ENCODE measurements at regions of chr1 and their contacts with region 1.

Region 1: GRCh38 chr1:204411451-204412204 is at the start of gene PPP1R15B:
- DNase-seq: peak; percentile 95 to 99 (median 97)
- ATAC-seq: peak; percentile 89
- H3K4me3 ChIP-seq: peak within 1 kb of the TSS; percentile 83 to 94
- H3K4me3 Mint-ChIP-seq: peak within 1 kb of the TSS; percentile 98
- H3K27ac ChIP-seq: peak within 1 kb of the TSS; percentile 95 to 99
- H3K27ac Mint-ChIP-seq: peak within 1 kb of the TSS; percentile 99
- H3K4me1 ChIP-seq: no peaks in the 10 kb centered on the region
- H3K4me1 Mint-ChIP-seq: peaks cover 11% of the 10 kb centered on the region
- H3K27me3 ChIP-seq: no peaks in the 10 kb centered on the region
- H3K27me3 Mint-ChIP-seq: no peaks in the 10 kb centered on the region
- CTCF ChIP-seq: no peak
- total RNA-seq, gene PPP1R15B: 144 to 146 TPM

Region 2: GRCh38 chr1:202957733-202958543 is 1453.7 kb before region 1 on chr1 and contains the start of gene ADIPOR1:
- CTCF ChIA-PET with region 1: no interaction called
- POLR2A ChIA-PET with region 1: no interaction called
- intact Hi-C with region 1: loop called in 1 of 2 experiments (anchors 2 kb)
- DNase-seq: peak; percentile 89 to 96 (median 94)
- ATAC-seq: peak; percentile 97
- H3K4me3 ChIP-seq: peak within 1 kb of the TSS; percentile 89 to 93
- H3K4me3 Mint-ChIP-seq: peak within 1 kb of the TSS; percentile 81
- H3K27ac ChIP-seq: peak within 1 kb of the TSS; percentile 89 to 94
- H3K27ac Mint-ChIP-seq: peak within 1 kb of the TSS; percentile 92
- H3K4me1 ChIP-seq: peaks cover 36% of the 10 kb centered on the region
- H3K4me1 Mint-ChIP-seq: peaks cover 46% of the 10 kb centered on the region
- H3K27me3 ChIP-seq: no peaks in the 10 kb centered on the region
- H3K27me3 Mint-ChIP-seq: no peaks in the 10 kb centered on the region
- CTCF ChIP-seq: no peak
- total RNA-seq, gene ADIPOR1: 106 to 117 TPM

Region 3: GRCh38 chr1:203861379-203862184 is 550.0 kb before region 1 on chr1 and contains the start of gene SNRPE:
- CTCF ChIA-PET with region 1: no interaction called
- POLR2A ChIA-PET with region 1: no interaction called
- intact Hi-C with region 1: loop called (anchors 2 to 5 kb)
- DNase-seq: peak; percentile 91 to 99 (median 96)
- ATAC-seq: peak; percentile 98
- H3K4me3 ChIP-seq: peak within 1 kb of the TSS; percentile 92 to 97
- H3K4me3 Mint-ChIP-seq: peak within 1 kb of the TSS; percentile 97
- H3K27ac ChIP-seq: peak within 1 kb of the TSS; percentile 80 to 86
- H3K27ac Mint-ChIP-seq: peak within 1 kb of the TSS; percentile 96
- H3K4me1 ChIP-seq: peaks cover 11% of the 10 kb centered on the region
- H3K4me1 Mint-ChIP-seq: peaks cover 21% of the 10 kb centered on the region
- H3K27me3 ChIP-seq: no peaks in the 10 kb centered on the region
- H3K27me3 Mint-ChIP-seq: no peaks in the 10 kb centered on the region
- CTCF ChIP-seq: peak; percentile 91
- total RNA-seq, gene SNRPE: 66.5 to 84.0 TPM

Region 4: GRCh38 chr1:204398217-204399081 is 13.2 kb before region 1 on chr1:
- CTCF ChIA-PET with region 1: interaction called, 62 read pairs
- POLR2A ChIA-PET with region 1: interaction called, 6 read pairs
- intact Hi-C with region 1: loop called in 1 of 2 experiments (anchors 1 kb)
- DNase-seq: peak; percentile 16 to 86 (median 54)
- ATAC-seq: peak; percentile 97
- H3K4me3 ChIP-seq: no peak overlapping the region
- H3K4me3 Mint-ChIP-seq: no peak overlapping the region
- H3K27ac ChIP-seq: peak overlapping the region in 1 of 2 experiments; percentile 21
- H3K27ac Mint-ChIP-seq: peak overlapping the region; percentile 80
- H3K4me1 ChIP-seq: peaks cover 4% of the 10 kb centered on the region
- H3K4me1 Mint-ChIP-seq: peaks cover 9% of the 10 kb centered on the region
- H3K27me3 ChIP-seq: no peaks in the 10 kb centered on the region
- H3K27me3 Mint-ChIP-seq: no peaks in the 10 kb centered on the region
- CTCF ChIP-seq: peak; percentile 87

Region 5: GRCh38 chr1:204453141-204453772 is 41.6 kb after region 1 on chr1:
- CTCF ChIA-PET with region 1: no interaction called
- POLR2A ChIA-PET with region 1: no interaction called
- intact Hi-C with region 1: loop called in 1 of 2 experiments (anchors 1 kb)
- DNase-seq: peak; percentile 46 to 95 (median 71)
- ATAC-seq: peak; percentile 98
- H3K4me3 ChIP-seq: peak overlapping the region in 1 of 2 experiments; percentile 10
- H3K4me3 Mint-ChIP-seq: peak overlapping the region; percentile 57
- H3K27ac ChIP-seq: peak overlapping the region; percentile 13 to 75
- H3K27ac Mint-ChIP-seq: peak overlapping the region; percentile 88
- H3K4me1 ChIP-seq: peaks cover 17% of the 10 kb centered on the region
- H3K4me1 Mint-ChIP-seq: peaks cover 23% of the 10 kb centered on the region
- H3K27me3 ChIP-seq: no peaks in the 10 kb centered on the region
- H3K27me3 Mint-ChIP-seq: no peaks in the 10 kb centered on the region
- CTCF ChIP-seq: no peak

Region 6: DNA sequence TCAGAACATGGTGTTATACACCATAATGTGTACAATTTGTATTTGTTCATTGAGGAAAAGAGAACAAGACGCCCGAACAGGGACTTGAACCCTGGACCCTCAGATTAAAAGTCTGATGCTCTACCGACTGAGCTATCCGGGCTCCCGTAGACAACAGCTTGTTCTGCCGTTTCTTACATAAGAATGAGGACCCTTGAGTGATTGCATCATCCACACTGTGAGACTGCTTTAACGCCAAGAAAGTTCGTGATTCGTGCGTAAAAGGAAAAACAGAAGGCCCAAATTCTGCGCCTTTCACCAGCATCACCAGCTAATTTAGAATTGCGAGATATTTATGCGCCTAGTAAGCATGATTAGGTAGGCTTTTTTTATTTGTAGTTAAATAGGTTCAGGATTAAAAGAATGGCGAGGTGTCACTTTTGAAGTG is 95.3 kb after region 1 on chr1:
- CTCF ChIA-PET with region 1: interaction called, 11 read pairs
- POLR2A ChIA-PET with region 1: interaction called, 6 read pairs
- intact Hi-C with region 1: loop called in 1 of 2 experiments (anchors 1 kb)
- DNase-seq: peak; percentile 73 to 97 (median 85)
- ATAC-seq: peak; percentile 73
- H3K4me3 ChIP-seq: peak overlapping the region; percentile 39 to 64
- H3K4me3 Mint-ChIP-seq: peak overlapping the region; percentile 86
- H3K27ac ChIP-seq: peak overlapping the region; percentile 84 to 96
- H3K27ac Mint-ChIP-seq: peak overlapping the region; percentile 97
- H3K4me1 ChIP-seq: peaks cover 15% of the 10 kb centered on the region
- H3K4me1 Mint-ChIP-seq: peaks cover 33% of the 10 kb centered on the region
- H3K27me3 ChIP-seq: no peaks in the 10 kb centered on the region
- H3K27me3 Mint-ChIP-seq: no peaks in the 10 kb centered on the region
- CTCF ChIP-seq: no peak

Region 7: GRCh38 chr1:204940591-204940990 is 529.0 kb after region 1 on chr1:
- CTCF ChIA-PET with region 1: no interaction called
- POLR2A ChIA-PET with region 1: no interaction called
- intact Hi-C with region 1: no loop called
- DNase-seq: no peak
- ATAC-seq: no peak
- H3K4me3 ChIP-seq: no peak overlapping the region
- H3K4me3 Mint-ChIP-seq: no peak overlapping the region
- H3K27ac ChIP-seq: no peak overlapping the region
- H3K27ac Mint-ChIP-seq: no peak overlapping the region
- H3K4me1 ChIP-seq: no peaks in the 10 kb centered on the region
- H3K4me1 Mint-ChIP-seq: no peaks in the 10 kb centered on the region
- H3K27me3 ChIP-seq: no peaks in the 10 kb centered on the region
- H3K27me3 Mint-ChIP-seq: peaks cover 12% of the 10 kb centered on the region
- CTCF ChIP-seq: no peak

Region 8: DNA sequence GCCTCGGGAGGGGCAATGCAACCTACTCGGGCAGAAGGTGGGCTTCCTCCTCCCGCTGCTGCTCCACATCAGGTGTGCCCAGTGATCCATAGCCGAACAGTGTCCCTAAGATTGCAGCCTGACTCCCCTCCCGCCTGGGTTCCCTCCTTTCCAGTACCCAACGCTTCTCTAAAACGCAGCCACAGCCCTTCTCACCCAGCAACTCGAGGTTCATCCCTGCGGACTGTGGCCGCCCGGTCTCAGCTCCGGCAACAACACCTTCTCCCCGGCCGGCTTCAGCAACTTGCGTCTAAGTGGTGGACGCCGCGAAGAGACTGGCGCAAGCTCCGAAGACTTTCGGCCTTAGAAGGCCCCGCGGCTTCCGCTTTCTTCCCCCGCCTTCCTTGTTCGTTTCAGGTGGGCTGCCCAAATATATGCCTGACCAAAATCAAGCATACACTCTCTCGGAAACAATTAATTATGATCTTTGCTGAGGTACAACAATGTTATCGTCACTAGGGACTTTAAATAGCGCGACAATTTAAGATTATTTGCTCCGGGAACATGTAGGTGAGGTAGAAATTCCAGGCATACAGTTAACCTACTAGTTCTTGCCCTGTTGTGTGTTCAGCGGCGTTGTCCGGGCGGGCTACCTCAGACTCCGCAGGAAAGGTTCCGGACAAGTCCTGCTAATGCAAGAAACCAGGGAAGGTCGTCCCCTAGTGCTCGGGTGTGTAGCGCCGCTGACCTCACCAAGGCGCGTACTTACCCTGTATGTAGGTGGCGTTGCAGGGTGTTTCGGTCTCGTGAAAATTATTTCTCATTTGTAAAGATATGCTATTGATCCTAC is 710.2 kb after region 1 on chr1 and contains the start of gene RBBP5:
- CTCF ChIA-PET with region 1: no interaction called
- POLR2A ChIA-PET with region 1: no interaction called
- intact Hi-C with region 1: loop called in 1 of 2 experiments (anchors 5 kb)
- DNase-seq: peak; percentile 92 to 98 (median 95)
- ATAC-seq: peak; percentile 93
- H3K4me3 ChIP-seq: peak within 1 kb of the TSS; percentile 91 to 95
- H3K4me3 Mint-ChIP-seq: peak within 1 kb of the TSS; percentile 96
- H3K27ac ChIP-seq: peak within 1 kb of the TSS; percentile 88 to 97
- H3K27ac Mint-ChIP-seq: peak within 1 kb of the TSS; percentile 100
- H3K4me1 ChIP-seq: peaks cover 26% of the 10 kb centered on the region
- H3K4me1 Mint-ChIP-seq: peaks cover 46% of the 10 kb centered on the region
- H3K27me3 ChIP-seq: no peaks in the 10 kb centered on the region
- H3K27me3 Mint-ChIP-seq: no peaks in the 10 kb centered on the region
- CTCF ChIP-seq: peak; percentile 59
- total RNA-seq, gene RBBP5: 23.9 to 25.7 TPM

Measured in CD8-positive, alpha-beta T cell (primary cell).